Endothelial cell of umbilical vein (primary cell): ENCODE measurements at regions of chr15 and their contacts with region 1.

Region 1: DNA sequence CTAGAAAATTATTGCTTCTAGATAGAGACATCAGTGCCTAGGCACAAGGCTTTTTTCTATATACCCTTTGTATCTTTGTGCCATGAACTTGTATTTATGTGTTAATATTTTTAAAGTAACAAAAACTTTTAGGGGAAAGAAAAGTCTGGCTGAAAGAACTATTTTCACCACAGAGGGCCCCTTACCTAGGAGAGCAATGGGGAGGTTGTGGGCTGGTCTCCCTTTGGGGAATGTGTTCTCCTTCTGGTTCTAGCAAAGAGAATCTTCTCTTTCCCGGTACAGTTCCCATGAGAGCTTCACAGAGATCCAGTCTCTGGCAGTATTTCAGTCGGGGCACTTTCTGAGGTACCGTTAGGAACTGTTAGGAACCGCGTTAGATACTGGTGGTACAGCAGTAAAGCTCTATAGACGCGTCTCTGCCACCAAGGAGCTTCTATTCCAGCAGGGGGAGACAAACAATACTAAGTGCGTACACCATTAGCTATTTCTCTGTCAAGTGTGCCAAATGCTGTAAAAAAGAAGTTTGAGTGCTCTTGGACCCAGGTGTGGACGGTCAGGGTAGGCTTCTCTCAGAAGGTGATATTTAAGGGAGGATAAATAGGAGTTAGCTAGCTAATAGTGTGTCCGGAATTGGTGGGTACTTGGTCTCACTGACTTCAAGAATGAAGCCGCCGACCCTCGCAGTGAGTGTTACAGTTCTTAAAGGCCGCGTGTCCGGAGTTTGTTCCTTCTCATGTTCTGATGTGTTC is 4.6 kb upstream of the EPB42 start:
- DNase-seq: peak; percentile 56
- H3K4me3 ChIP-seq: no peak overlapping the region
- H3K27ac ChIP-seq: no peak overlapping the region
- H3K4me1 ChIP-seq: no peaks in the 10 kb centered on the region
- H3K27me3 ChIP-seq: peaks cover 8 to 19% of the 10 kb centered on the region in 2 experiments
- CTCF ChIP-seq: peak; percentile 73 to 76
- POLR2A ChIP-seq: no peak

Region 2: DNA sequence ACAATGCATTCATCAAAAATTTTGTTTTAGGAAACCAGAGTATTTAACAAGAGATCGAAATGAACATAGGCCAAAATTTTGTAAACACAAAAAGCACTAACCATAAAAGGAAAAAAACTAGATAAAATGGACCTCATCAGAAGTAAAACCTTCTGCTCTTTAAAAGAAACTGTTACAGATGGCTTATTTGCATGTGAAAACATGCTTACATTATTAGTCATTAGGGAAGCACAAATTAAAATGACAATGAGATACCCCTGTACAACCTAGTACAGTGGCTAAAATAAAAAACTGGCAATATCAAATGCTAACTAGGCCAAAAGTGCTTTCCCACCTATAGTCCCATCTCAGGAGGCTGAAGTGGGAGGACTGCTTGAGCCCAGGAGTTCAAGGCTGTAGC is 138.8 kb before region 1 on chr15:
- CTCF ChIA-PET with region 1: no interaction called
- POLR2A ChIA-PET with region 1: no interaction called
- dilution Hi-C with region 1: no loop called
- intact Hi-C with region 1: no loop called
- DNase-seq: no peak
- H3K4me3 ChIP-seq: no peak overlapping the region
- H3K27ac ChIP-seq: no peak overlapping the region
- H3K4me1 ChIP-seq: peaks cover 3% of the 10 kb centered on the region
- H3K27me3 ChIP-seq: no peaks in the 10 kb centered on the region
- CTCF ChIP-seq: no peak
- POLR2A ChIP-seq: no peak

Region 3: GRCh38 chr15:43194795-43195194 is 30.6 kb before region 1 on chr15:
- CTCF ChIA-PET with region 1: interaction called, 14 read pairs
- POLR2A ChIA-PET with region 1: no interaction called
- dilution Hi-C with region 1: no loop called
- intact Hi-C with region 1: no loop called
- DNase-seq: no peak
- H3K4me3 ChIP-seq: no peak overlapping the region
- H3K27ac ChIP-seq: no peak overlapping the region
- H3K4me1 ChIP-seq: peaks cover 11% of the 10 kb centered on the region
- H3K27me3 ChIP-seq: no peaks in the 10 kb centered on the region
- CTCF ChIP-seq: no peak
- POLR2A ChIP-seq: no peak

Region 4: GRCh38 chr15:43241100-43241499 is 15.7 kb after region 1 on chr15:
- CTCF ChIA-PET with region 1: interaction called, 28 read pairs
- POLR2A ChIA-PET with region 1: no interaction called
- dilution Hi-C with region 1: no loop called
- intact Hi-C with region 1: no loop called
- DNase-seq: no peak
- H3K4me3 ChIP-seq: no peak overlapping the region
- H3K27ac ChIP-seq: no peak overlapping the region
- H3K4me1 ChIP-seq: no peaks in the 10 kb centered on the region
- H3K27me3 ChIP-seq: peaks cover 5 to 8% of the 10 kb centered on the region in 2 experiments
- CTCF ChIP-seq: no peak
- POLR2A ChIP-seq: no peak

Region 5: DNA sequence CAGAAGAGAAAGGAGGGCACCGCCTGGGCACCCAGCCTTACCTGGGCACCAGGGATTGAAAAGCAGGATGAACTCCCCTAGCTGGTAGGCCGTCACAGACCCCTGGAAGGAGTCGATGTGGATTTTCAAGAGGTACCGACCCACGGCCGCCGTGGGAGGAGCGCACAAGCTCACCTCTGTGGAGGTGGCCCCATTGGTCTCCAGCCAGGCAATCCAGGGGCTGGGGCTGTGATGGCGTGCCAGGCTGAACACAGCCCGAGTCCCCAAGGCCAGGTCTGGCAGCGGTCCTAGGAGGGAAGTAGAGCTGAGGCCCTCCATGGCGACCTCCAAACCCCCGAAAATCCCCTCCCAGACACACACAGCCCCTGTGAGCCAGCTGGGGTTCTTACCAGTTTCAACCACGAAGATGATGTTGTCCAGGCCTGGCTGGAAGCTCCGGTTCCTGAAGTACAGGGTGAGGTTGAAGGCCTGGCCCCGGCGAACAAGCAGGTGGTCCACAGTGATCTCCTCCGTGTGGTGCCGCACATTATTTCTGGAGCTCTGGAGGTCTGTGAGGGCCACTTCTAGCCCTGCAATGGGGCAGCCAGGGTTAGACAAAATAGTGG is 34.7 kb after region 1 on chr15:
- CTCF ChIA-PET with region 1: interaction called, 15 read pairs
- POLR2A ChIA-PET with region 1: no interaction called
- dilution Hi-C with region 1: no loop called
- intact Hi-C with region 1: no loop called
- DNase-seq: no peak
- H3K4me3 ChIP-seq: no peak overlapping the region
- H3K27ac ChIP-seq: no peak overlapping the region
- H3K4me1 ChIP-seq: no peaks in the 10 kb centered on the region
- H3K27me3 ChIP-seq: peaks cover 9 to 26% of the 10 kb centered on the region in 2 experiments
- CTCF ChIP-seq: no peak
- POLR2A ChIP-seq: no peak

Region 6: GRCh38 chr15:43274136-43274535 is 48.8 kb after region 1 on chr15:
- CTCF ChIA-PET with region 1: interaction called, 58 read pairs
- POLR2A ChIA-PET with region 1: no interaction called
- dilution Hi-C with region 1: no loop called
- intact Hi-C with region 1: no loop called
- DNase-seq: no peak
- H3K4me3 ChIP-seq: no peak overlapping the region
- H3K27ac ChIP-seq: no peak overlapping the region
- H3K4me1 ChIP-seq: no peaks in the 10 kb centered on the region
- H3K27me3 ChIP-seq: peaks cover 0 to 6% of the 10 kb centered on the region in 2 experiments
- CTCF ChIP-seq: no peak
- POLR2A ChIP-seq: no peak

Region 7: DNA sequence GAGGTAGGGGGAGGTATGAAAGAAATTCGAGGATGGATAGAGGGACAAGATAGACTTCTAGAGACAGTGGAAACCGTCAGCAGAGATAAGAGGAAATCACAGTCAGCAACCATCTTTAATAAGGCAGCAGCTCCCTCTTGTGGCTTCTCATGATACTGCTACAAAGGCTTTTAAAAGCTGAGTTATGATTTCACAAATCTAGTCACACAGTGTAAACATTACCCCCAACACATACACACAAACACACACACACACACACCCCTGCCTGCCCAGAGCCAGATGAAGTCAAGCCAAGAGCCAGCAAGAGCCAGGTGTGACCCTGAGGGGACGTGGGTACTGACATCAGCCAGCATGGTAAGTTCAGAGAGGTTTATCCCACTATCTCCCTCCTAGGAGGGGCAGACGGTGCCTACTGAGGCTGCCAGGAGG is 60.2 kb after region 1 on chr15:
- CTCF ChIA-PET with region 1: interaction called, 427 read pairs
- POLR2A ChIA-PET with region 1: interaction called, 3 read pairs
- dilution Hi-C with region 1: no loop called
- intact Hi-C with region 1: loop called (anchors 1 kb)
- DNase-seq: peak; percentile 64
- H3K4me3 ChIP-seq: no peak overlapping the region
- H3K27ac ChIP-seq: no peak overlapping the region
- H3K4me1 ChIP-seq: peaks cover 2% of the 10 kb centered on the region
- H3K27me3 ChIP-seq: peaks cover 2 to 6% of the 10 kb centered on the region in 2 experiments
- CTCF ChIP-seq: peak; percentile 66 to 75
- POLR2A ChIP-seq: no peak

Region 8: DNA sequence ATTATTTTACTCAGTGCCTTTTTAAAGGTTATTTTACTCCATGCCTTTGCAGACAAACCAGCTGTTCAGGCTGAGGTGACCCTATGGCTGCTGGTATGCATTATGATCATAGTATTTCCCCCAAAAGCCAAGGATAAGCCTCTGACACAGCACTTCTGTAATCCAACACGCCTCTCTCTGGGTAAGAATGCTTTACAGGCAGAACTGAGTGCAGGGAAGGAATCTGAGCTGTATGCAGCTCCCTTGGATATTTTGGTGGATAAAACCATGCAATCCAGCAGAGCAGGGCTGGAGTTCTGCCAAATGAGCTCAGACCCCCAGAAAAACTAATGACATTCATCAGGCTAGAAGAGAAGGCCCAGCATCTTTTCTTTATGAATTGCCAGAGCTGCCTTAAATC is 280.4 kb after region 1 on chr15:
- CTCF ChIA-PET with region 1: no interaction called
- POLR2A ChIA-PET with region 1: no interaction called
- dilution Hi-C with region 1: no loop called
- intact Hi-C with region 1: no loop called
- DNase-seq: no peak
- H3K4me3 ChIP-seq: no peak overlapping the region
- H3K27ac ChIP-seq: no peak overlapping the region
- H3K4me1 ChIP-seq: peaks cover 7% of the 10 kb centered on the region
- H3K27me3 ChIP-seq: peaks cover 0 to 2% of the 10 kb centered on the region in 2 experiments
- CTCF ChIP-seq: no peak
- POLR2A ChIP-seq: no peak